Sigmoid colon (tissue), 7 donors: ENCODE measurements at regions of chr16 and their contacts with region 1.

Region 1: DNA sequence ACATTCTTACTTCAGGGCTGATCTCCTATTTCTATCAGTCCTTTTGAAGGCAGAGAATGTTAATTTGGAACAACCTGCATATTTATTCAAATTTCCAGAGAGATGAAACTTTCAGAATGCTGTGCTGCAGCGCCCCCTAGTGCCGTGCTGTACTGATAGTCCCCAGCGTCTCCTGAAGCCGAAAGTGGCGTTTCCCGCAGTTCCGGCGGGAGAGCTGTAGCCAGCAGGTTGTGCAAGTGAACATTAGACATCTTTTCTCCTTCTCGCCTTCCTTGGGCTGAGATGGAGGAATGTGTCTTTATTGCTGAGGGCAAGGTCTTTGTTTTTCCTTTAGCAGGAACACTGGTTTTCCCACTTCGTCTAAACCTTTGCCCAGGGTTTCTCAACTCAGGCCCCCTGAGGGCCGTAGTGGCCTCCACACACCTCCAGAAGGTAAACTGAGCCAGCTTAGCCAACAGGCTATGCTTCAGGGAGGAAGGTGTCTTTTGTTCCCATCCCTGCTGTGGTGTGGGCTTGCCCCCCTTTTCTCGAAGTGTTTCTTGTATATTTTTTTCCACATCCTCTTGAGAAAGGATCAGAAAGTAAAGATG is 26.4 kb downstream of the USP10 start:
- DNase-seq: peak; percentile 95
- H3K4me3 ChIP-seq: peak overlapping the region in 1 of 4 donors; percentile 9
- H3K27ac ChIP-seq: peak overlapping the region; percentile 3 to 68 (median 63)
- H3K4me1 ChIP-seq: peaks cover 0 to 62% (median 48%) of the 10 kb centered on the region in 4 donors
- H3K27me3 ChIP-seq: no peaks in the 10 kb centered on the region
- CTCF ChIP-seq: peak; percentile 92 to 95 (median 93)
- EP300 ChIP-seq: no peak
- POLR2A ChIP-seq: no peak

Region 2: GRCh38 chr16:84511180-84511824 is 214.9 kb before region 1 on chr16:
- intact Hi-C with region 1: loop called (anchors 5 kb)
- DNase-seq: peak; percentile 92
- H3K4me3 ChIP-seq: no peak overlapping the region
- H3K27ac ChIP-seq: no peak overlapping the region
- H3K4me1 ChIP-seq: peaks cover 0 to 11% (median 9%) of the 10 kb centered on the region in 4 donors
- H3K27me3 ChIP-seq: no peaks in the 10 kb centered on the region
- CTCF ChIP-seq: peak; percentile 84 to 97 (median 94)
- EP300 ChIP-seq: no peak
- POLR2A ChIP-seq: no peak

Region 3: GRCh38 chr16:84672276-84673202 is 53.6 kb before region 1 on chr16:
- intact Hi-C with region 1: loop called (anchors 1 kb)
- DNase-seq: peak; percentile 89
- H3K4me3 ChIP-seq: no peak overlapping the region
- H3K27ac ChIP-seq: no peak overlapping the region
- H3K4me1 ChIP-seq: peaks cover 0 to 6% (median under 1%) of the 10 kb centered on the region in 4 donors
- H3K27me3 ChIP-seq: no peaks in the 10 kb centered on the region
- CTCF ChIP-seq: peak; percentile 81 to 89 (median 88)
- EP300 ChIP-seq: no peak
- POLR2A ChIP-seq: no peak

Region 4: DNA sequence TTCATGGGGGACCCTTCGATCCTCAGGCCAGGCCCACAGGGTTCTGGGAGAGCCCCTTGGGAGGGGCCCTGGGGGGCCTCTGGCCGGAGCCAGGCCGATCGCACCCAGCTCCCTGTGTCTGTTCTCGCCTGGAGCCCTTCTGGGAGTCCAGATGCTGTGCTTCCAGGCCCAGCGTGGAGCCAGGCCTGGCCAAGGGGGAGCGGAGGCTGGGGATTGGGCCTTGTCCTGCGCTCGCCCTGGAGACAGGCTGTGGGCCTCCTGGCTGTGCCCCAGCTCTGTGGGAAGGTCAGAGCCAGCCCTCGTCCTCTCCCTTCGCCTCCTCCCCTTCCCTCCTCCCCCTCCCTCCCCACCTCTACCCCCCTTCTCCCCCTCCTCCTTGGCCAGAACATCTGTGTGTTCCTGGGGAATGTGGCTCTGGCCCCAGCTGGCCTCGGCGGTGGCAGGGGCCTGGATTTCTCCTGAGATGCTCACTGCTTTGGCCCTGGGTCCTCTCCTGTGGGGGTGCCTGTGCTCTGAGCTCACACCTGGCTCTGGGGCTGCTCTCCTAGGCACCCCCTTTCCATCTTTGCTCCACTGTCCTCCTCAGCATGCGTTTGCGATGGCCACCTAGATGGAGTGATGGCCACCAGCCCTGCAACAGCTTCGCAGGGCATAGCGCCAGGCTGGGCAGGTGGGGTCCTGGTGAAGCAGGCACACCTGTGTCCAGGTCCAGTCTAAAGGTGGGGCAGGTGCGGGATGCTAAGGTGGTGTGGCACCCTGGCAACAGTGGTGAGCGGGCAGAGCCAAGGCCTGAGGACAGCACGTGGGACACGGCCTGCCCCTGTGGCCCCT is 476.7 kb after region 1 on chr16:
- intact Hi-C with region 1: no loop called
- DNase-seq: peak; percentile 98
- H3K4me3 ChIP-seq: no peak overlapping the region
- H3K27ac ChIP-seq: peak overlapping the region; percentile 77 to 90 (median 83)
- H3K4me1 ChIP-seq: peaks cover 0 to 98% (median 88%) of the 10 kb centered on the region in 4 donors
- H3K27me3 ChIP-seq: no peaks in the 10 kb centered on the region
- CTCF ChIP-seq: no peak
- EP300 ChIP-seq: no peak
- POLR2A ChIP-seq: no peak